PC-3 (cell line): ENCODE measurements at regions of chr20 and their contacts with region 1.

Region 1: DNA sequence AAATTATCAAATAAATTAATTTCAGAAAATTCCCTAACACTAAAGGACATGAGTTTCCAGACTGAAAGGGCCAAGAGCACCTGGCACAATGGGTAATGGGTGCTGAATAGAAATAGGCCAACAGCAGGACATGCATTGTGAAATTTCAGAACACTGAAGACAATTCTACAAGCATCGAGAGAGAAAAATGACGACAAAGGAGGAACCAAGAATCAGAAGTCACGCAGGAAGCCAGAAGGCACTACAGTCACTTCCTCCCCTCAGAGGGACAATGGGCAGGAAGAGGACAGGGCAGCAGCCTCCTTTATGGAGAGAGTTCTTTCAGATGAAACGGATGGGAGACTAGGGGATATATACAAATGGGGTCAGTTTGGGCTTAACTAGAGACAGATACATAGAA is 29.6 kb downstream of the PCNA start:
- DNase-seq: no peak
- ATAC-seq: no peak
- H3K4me3 ChIP-seq: no peak overlapping the region
- H3K27ac ChIP-seq: no peak overlapping the region
- H3K4me1 ChIP-seq: no peaks in the 10 kb centered on the region
- H3K27me3 ChIP-seq: no peaks in the 10 kb centered on the region
- CTCF ChIP-seq: no peak

Region 2: DNA sequence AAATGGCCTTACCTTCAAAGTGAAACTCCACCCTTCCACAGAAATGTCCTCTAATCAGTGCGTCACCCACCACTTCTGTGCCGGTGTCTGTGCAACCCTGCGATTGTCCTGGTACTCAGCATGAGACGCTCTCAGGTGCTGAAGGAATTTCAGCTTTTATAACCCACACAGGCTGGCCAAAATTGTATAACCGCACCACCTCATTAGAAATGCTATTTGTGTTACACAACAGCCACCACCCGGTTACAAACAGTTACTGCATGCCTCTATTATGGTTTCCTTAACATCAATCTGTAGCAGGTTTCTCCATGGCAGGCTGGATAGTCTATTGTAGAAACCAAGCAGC is 140.4 kb before region 1 on chr20:
- CTCF ChIA-PET with region 1: no interaction called
- POLR2A ChIA-PET with region 1: no interaction called
- intact Hi-C with region 1: no loop called
- DNase-seq: peak; percentile 60
- ATAC-seq: peak; percentile 61
- H3K4me3 ChIP-seq: no peak overlapping the region
- H3K27ac ChIP-seq: no peak overlapping the region
- H3K4me1 ChIP-seq: peaks cover 5% of the 10 kb centered on the region
- H3K27me3 ChIP-seq: no peaks in the 10 kb centered on the region
- CTCF ChIP-seq: peak; percentile 86

Region 3: GRCh38 chr20:5078399-5078958 is 11.7 kb before region 1 on chr20:
- CTCF ChIA-PET with region 1: no interaction called
- POLR2A ChIA-PET with region 1: interaction called, 15 read pairs
- intact Hi-C with region 1: no loop called
- DNase-seq: peak; percentile 33
- ATAC-seq: peak; percentile 53
- H3K4me3 ChIP-seq: no peak overlapping the region
- H3K27ac ChIP-seq: no peak overlapping the region
- H3K4me1 ChIP-seq: peaks cover 10% of the 10 kb centered on the region
- H3K27me3 ChIP-seq: no peaks in the 10 kb centered on the region
- CTCF ChIP-seq: no peak

Region 4: GRCh38 chr20:6439737-6440442 is 1349.7 kb after region 1 on chr20:
- CTCF ChIA-PET with region 1: no interaction called
- POLR2A ChIA-PET with region 1: no interaction called
- intact Hi-C with region 1: no loop called
- DNase-seq: no peak
- ATAC-seq: no peak
- H3K4me3 ChIP-seq: no peak overlapping the region
- H3K27ac ChIP-seq: no peak overlapping the region
- H3K4me1 ChIP-seq: no peaks in the 10 kb centered on the region
- H3K27me3 ChIP-seq: peaks cover 3% of the 10 kb centered on the region; the same call in 1 of the 2 replicates
- CTCF ChIP-seq: no peak